Gastrocnemius medialis (tissue), 4 donors: ENCODE measurements at regions of chr10 and their contacts with region 1.

Region 1: DNA sequence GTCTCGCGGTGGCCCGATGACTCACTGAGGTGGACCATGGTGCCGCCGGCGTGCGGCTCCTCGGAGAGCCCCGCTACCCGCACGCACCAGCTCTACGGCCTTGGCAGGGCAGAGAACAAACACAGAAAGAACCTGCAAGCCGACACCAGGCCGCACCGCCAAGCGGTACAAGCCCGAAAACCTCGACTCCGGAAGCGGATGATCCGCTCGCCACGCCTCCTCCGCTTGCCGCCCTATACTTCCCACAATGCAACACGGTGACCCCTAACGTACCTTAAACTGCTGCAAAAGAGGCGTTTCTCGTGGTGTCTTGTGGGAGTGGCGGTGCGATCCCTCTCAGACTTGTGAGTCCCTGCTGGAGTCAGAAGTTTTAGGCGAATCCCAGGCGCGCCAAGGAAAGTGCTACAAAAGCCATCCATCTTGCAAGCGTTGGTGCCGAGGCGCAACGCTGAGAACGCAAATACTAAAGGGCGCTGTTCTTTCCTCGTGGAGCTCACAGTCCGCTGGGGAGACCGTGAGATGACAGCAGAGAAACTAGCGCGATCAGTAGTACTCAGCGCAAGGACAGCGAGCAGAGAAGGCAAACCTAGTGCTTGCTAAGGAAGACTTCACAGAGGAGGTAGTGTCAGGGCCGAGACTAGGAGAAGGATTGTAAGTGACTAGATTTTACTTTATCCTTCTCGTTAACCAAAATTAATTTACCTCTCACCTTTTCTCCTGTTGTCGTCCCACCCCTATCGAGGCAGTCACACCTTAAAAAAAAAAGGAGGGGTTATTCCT is at the start of gene MRPS16:
- DNase-seq: peak; percentile 94 to 97
- ATAC-seq: peak; percentile 99
- H3K4me3 ChIP-seq: peak within 1 kb of the TSS; percentile 78 to 98 (median 88)
- H3K27ac ChIP-seq: peak within 1 kb of the TSS; percentile 89 to 99 (median 96)
- H3K4me1 ChIP-seq: peaks cover 30 to 31% of the 10 kb centered on the region in 2 donors
- H3K27me3 ChIP-seq: no peaks in the 10 kb centered on the region
- CTCF ChIP-seq: no peak
- POLR2A ChIP-seq: peak; percentile 72 to 74
- total RNA-seq, gene MRPS16: 73.2 to 104 (median 79.6) TPM

Region 2: DNA sequence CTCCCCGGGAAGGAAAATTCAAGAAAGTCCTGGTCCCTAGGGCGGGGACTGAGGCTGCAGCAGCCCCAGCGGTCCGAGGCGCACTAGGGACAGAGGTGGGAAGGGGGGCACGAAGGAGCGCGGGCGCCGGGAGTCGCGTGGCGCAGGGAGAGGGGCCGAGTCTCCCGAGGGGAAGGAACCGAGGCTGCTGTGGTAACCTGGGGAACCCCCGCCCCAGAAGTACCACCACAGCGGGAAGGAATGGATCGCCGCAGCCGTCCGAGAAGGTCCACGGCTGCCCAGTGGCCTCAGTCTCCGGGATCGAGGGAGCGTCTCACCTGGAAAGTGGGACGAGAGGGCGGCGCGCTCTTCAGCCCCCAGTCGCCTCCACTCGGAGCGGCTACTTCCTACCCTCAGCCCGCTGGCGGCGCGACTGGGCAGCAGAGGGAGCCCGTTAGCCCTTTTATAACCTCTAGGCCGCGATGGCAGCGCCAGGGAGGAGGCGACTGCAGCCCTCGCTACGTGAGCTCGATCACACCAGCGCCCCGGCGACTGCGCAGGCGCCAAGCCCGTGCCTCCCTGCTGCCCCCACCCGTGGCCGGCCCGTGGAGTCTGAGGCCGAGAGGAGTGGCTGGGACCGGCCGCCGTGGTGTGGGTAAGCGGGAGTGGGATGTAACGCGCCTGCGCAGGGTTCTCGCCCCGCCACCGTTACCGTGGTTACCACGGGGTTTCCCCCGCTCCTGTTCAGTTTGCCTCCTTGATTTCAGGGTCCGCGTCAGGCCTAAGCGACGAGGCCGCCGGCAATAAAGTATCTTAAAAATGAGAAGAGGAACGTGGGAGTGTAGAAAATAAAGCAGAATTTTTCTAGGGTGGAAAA is 156.0 kb before region 1 on chr10 and contains the start of gene P4HA1:
- in situ Hi-C with region 1: no loop called
- intact Hi-C with region 1: loop called (anchors 5 kb)
- DNase-seq: peak; percentile 98 to 99
- ATAC-seq: peak; percentile 79 to 82
- H3K4me3 ChIP-seq: peak within 1 kb of the TSS; percentile 83 to 99 (median 94)
- H3K27ac ChIP-seq: peak within 1 kb of the TSS; percentile 91 to 100 (median 96)
- H3K4me1 ChIP-seq: peaks cover 53% of the 10 kb centered on the region in 2 donors
- H3K27me3 ChIP-seq: no peaks in the 10 kb centered on the region
- CTCF ChIP-seq: peak; percentile 70 to 89 (median 78)
- POLR2A ChIP-seq: peak; percentile 98 to 99
- total RNA-seq, gene P4HA1: 65.3 to 348 (median 217) TPM

Region 3: DNA sequence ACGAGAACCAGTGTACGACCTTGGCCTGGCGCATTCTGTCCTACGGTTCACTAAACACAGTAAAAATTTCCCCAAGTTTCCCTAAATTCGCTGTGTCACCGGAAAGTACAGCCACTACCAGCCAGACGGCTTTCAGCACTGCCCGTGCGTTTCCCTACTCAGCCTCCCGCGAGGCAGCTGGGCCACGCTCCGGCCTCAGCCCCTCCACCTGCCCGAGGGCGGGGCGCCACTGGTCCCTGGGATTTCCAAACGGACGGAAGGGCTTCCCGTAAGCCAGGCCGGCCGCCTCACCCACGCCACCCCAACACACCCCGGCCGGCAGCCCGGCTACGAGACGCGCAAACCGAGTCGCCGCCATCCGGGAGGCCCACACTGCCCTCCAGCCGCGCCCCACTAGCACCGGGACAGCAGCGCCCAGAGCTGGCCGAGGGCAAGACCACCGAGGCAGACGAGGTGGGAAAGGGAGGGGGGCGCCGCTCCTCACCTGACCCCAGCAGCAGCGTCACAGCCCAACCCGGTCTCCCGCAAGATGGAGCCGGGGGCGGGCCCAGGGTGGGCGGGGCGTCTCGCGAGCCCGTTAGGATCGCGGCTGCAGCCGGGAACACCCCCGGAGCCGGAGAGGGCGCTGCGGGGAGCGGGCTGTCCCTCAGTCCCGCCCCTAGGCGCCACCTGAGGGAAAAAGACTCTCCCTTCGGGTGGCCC is 161.0 kb after region 1 on chr10 and contains the start of gene ANXA7:
- in situ Hi-C with region 1: no loop called
- intact Hi-C with region 1: loop called (anchors 2 kb)
- DNase-seq: peak; percentile 89 to 93
- ATAC-seq: peak; percentile 82
- H3K4me3 ChIP-seq: peak within 1 kb of the TSS; percentile 80 to 96 (median 93)
- H3K27ac ChIP-seq: peak within 1 kb of the TSS; percentile 92 to 99 (median 98)
- H3K4me1 ChIP-seq: peaks cover 47 to 52% of the 10 kb centered on the region in 2 donors
- H3K27me3 ChIP-seq: no peaks in the 10 kb centered on the region
- CTCF ChIP-seq: peak in 2 of 5 experiments; percentile 60 to 61
- POLR2A ChIP-seq: peak; percentile 82 to 87
- total RNA-seq, gene ANXA7: 169 to 203 (median 186) TPM

Region 4: GRCh38 chr10:73495884-73496674 is 243.4 kb after region 1 on chr10 and contains the start of gene PPP3CB:
- in situ Hi-C with region 1: no loop called
- intact Hi-C with region 1: loop called (anchors 5 kb)
- DNase-seq: peak; percentile 84 to 90
- ATAC-seq: peak; percentile 89 to 91
- H3K4me3 ChIP-seq: peak within 1 kb of the TSS; percentile 79 to 99 (median 90)
- H3K27ac ChIP-seq: peak within 1 kb of the TSS; percentile 93 to 99 (median 96)
- H3K4me1 ChIP-seq: peaks cover 46 to 48% of the 10 kb centered on the region in 2 donors
- H3K27me3 ChIP-seq: no peaks in the 10 kb centered on the region
- CTCF ChIP-seq: no peak
- POLR2A ChIP-seq: no peak
- total RNA-seq, gene PPP3CB: 60.1 to 91.6 (median 68.7) TPM

Region 5: DNA sequence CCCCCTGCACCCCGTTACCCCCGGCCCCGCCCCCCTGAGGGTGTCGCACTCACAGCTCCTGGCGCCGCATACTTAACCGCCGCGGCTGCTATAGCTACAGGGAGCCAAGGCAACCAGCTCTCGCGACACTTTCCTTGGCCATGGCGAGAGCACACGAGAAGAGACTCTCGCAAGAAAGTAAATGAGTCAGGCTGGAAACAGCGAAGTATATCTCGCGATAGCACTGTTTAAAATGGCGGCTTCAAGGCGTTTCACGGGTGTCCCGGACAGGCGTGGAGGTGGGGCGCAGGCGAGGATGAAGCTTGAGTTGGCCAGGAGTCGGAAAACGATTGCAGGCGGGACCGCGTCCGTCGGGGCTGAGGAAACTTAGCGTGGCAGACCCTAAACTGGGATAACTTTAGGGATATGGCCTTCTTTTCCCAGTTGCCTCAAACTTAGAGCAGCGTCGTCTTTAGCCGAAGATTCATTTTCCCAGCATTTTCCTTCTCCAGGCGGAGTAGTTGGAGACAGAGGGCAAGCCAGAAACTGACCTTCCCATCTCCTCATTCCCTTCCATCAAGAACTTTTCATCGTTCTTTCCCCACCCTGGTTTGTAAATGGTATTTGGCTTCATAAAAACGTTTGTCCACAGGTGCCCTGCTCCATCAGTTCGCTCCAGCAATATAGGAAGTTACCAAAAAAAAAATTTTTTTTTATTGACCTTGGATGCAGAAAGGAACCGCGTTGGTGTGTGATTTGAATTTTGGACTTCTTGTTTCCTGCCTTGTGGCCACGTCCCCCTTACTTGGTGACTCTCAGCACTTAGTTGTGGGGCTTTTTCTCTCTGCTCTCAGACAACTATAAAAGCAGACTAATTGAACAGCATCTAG is 373.5 kb after region 1 on chr10:
- in situ Hi-C with region 1: loop called in 1 of 4 experiments (anchors 25 kb)
- intact Hi-C with region 1: no loop called
- DNase-seq: peak; percentile 89 to 94
- ATAC-seq: peak; percentile 97 to 99
- H3K4me3 ChIP-seq: peak overlapping the region; percentile 61 to 98 (median 90)
- H3K27ac ChIP-seq: peak overlapping the region; percentile 79 to 96 (median 83)
- H3K4me1 ChIP-seq: peaks cover 14 to 17% of the 10 kb centered on the region in 2 donors
- H3K27me3 ChIP-seq: no peaks in the 10 kb centered on the region
- CTCF ChIP-seq: no peak
- POLR2A ChIP-seq: peak in 1 of 2 donors; percentile 54